HEK293 (cell line): ENCODE measurements at regions of chr1 and their contacts with region 1.

Region 1: GRCh38 chr1:231326248-231326647 is 11.4 kb downstream of the EXOC8 start:
- H3K4me3 ChIP-seq: no peak overlapping the region
- H3K27ac ChIP-seq: no peak overlapping the region
- H3K4me1 ChIP-seq: 0 out of 2 replicates have a peak, but pooled peaks cover 4% of the 10 kb centered on the region
- CTCF ChIP-seq: no peak

Region 2: DNA sequence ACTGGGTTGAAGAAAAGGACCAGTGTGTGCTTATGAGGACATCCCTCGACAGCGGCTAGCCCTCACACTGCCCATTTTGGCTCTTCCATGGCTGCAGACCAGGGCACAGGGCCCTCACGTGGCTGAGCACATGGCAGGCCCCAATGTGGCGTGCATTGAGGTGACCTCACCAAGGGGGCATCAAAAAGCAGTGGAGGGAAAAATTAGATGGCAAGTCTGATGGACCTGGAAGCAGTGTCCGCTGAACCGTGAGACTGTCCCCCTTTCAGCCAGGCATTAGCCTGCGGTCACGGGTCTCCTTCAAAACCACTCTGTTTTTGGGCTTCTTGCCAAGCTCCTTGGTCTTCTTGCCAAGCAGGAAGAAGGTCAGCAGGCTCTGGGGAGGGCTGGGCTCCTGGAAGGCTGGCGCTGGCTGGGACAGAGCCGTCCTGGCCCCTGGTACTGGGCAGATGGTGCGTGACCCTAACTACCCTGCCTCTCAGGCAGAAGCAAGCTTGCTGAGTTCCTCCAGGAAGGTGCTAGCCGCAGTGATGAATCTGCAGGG is 133.6 kb before region 1 on chr1:
- CTCF ChIA-PET with region 1: no interaction called
- POLR2A ChIA-PET with region 1: no interaction called
- H3K4me3 ChIP-seq: no peak overlapping the region
- H3K27ac ChIP-seq: no peak overlapping the region
- H3K4me1 ChIP-seq: no peaks in the 10 kb centered on the region
- CTCF ChIP-seq: no peak

Region 3: GRCh38 chr1:231315887-231316286 is 10.4 kb before region 1 on chr1:
- CTCF ChIA-PET with region 1: interaction called, 21 read pairs
- POLR2A ChIA-PET with region 1: no interaction called
- H3K4me3 ChIP-seq: no peak overlapping the region
- H3K27ac ChIP-seq: no peak overlapping the region
- H3K4me1 ChIP-seq: no peaks in the 10 kb centered on the region
- CTCF ChIP-seq: peak; percentile 81